ENCODE measurements at regions of chr5 and their contacts with region 1.

Region 1: GRCh38 chr5:34869256-34869655 is 30.3 kb downstream of the TTC23L start:
- DNase-seq: no peak
- H3K4me3 ChIP-seq: no peak overlapping the region
- H3K27ac ChIP-seq: no peak overlapping the region
- H3K4me1 ChIP-seq: peaks cover 3% of the 10 kb centered on the region
- H3K27me3 ChIP-seq: no peaks in the 10 kb centered on the region
- CTCF ChIP-seq: no peak
- POLR2A ChIP-seq: no peak

Region 2: DNA sequence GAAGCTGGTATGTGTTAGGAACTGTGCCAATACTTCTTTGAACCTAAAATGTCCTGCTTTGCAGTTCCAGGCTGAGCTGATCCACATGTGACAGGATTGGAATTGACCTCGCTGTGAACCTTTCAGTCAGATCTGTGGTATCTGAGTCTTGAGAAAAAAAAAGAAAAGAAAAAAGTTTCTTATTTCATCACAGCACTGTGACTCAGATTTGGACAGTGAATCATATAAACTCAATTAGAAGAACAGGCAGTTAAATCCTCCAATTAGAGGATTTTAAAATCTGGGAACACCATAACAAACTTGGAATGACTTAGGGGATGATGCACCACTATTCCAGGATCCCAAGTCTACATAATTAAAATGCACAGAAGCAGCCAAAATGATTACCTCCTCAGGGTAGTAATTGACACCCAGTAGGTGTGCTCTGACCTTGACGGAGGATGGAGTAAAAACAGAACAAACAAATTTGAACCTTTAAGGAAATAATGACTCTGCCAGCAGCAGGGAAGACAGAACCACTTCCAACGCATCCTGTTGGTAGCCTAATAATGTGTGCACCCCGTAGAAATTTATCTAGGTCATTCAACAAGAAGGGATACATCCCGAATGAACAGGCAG is 271.0 kb before region 1 on chr5:
- CTCF ChIA-PET with region 1: no interaction called
- POLR2A ChIA-PET with region 1: no interaction called
- dilution Hi-C with region 1: no loop called
- intact Hi-C with region 1: no loop called
- DNase-seq: peak; percentile 90
- H3K4me3 ChIP-seq: no peak overlapping the region
- H3K27ac ChIP-seq: peak overlapping the region; percentile 84
- H3K4me1 ChIP-seq: peaks cover 25% of the 10 kb centered on the region
- H3K27me3 ChIP-seq: no peaks in the 10 kb centered on the region
- CTCF ChIP-seq: no peak
- POLR2A ChIP-seq: no peak

Region 3: GRCh38 chr5:34898258-34898895 is 29.1 kb after region 1 on chr5:
- CTCF ChIA-PET with region 1: interaction called, 12 read pairs
- POLR2A ChIA-PET with region 1: no interaction called
- dilution Hi-C with region 1: no loop called
- intact Hi-C with region 1: no loop called
- DNase-seq: peak; percentile 74
- H3K4me3 ChIP-seq: no peak overlapping the region
- H3K27ac ChIP-seq: no peak overlapping the region
- H3K4me1 ChIP-seq: no peaks in the 10 kb centered on the region
- H3K27me3 ChIP-seq: no peaks in the 10 kb centered on the region
- CTCF ChIP-seq: peak; percentile 83 to 84
- POLR2A ChIP-seq: no peak

Measured in endothelial cell of umbilical vein (primary cell).